ENCODE measurements at regions of chr3 and their contacts with region 1.

Region 1: DNA sequence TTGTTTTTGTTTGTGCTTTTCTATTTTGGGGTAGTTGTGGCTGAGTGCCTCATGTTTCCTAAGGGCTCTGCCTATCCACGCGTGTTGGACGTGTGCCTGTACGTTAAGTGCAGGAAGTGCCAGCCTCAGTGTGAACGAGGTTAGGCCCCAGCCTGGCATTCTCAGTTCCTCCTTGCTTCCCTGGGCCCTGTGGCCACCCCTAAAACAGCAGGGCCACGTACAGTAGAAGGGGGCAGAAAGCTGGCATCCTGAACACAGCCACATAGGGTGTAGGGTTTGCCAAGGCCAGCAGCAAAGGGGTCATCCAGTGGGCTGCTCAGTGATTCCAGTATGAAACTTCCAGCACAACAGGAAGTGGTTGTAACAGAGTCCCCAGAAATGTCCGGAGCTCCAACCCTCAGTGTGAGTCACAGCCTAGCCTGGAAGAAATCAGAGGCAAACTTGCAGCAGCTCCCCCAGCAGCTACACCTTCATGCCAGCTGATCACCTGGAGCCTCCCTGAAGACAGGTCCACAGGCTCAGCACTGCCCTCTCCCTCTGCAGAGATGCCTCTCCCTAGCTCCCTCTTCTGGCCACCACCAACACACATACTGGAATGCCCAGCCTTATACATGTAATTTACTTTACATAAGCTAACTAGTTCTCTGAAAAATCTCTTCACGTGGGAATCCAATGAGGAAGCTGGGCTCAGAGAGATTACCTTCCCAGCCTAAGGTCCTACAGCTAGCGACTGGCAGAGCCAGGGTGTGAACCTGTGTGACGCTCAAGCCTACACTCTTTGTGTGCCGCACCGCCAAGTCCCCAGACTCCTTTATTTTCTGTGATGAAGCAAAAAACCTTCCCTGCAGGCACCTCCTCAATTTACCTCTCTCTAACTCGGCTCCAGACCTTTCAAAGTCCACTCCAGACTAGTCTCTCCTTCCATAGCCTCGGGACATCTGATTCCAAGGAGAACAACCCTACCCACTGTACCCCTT is 26.6 kb downstream of the ILDR1 start:
- DNase-seq: peak; percentile 74
- ATAC-seq: peak; percentile 72
- H3K4me3 ChIP-seq: 0 out of 2 replicates have a peak overlapping the region, but pooled peaks have one; percentile 32
- H3K27ac ChIP-seq: peak overlapping the region; percentile 67
- H3K4me1 ChIP-seq: peaks cover 66% of the 10 kb centered on the region
- H3K27me3 ChIP-seq: no peaks in the 10 kb centered on the region
- CTCF ChIP-seq: peak; percentile 56 to 71 (median 59)
- EP300 ChIP-seq: no peak; a peak in 1 of 4 replicates
- POLR2A ChIP-seq: no peak
- RAD21 ChIP-seq: peak; percentile 59

Region 2: GRCh38 chr3:121809249-121809648 is 186.2 kb before region 1 on chr3:
- CTCF ChIA-PET with region 1: interaction called, 3 read pairs
- POLR2A ChIA-PET with region 1: no interaction called
- RAD21 ChIA-PET with region 1: interaction called, 4 read pairs
- SMC1A ChIA-PET with region 1: interaction called, 12 read pairs
- in situ Hi-C with region 1: no loop called
- intact Hi-C with region 1: no loop called
- DNase-seq: peak; percentile 84
- ATAC-seq: peak; percentile 99
- H3K4me3 ChIP-seq: no peak overlapping the region
- H3K27ac ChIP-seq: peak overlapping the region; percentile 81
- H3K4me1 ChIP-seq: peaks cover 26% of the 10 kb centered on the region
- H3K27me3 ChIP-seq: no peaks in the 10 kb centered on the region
- CTCF ChIP-seq: no peak
- EP300 ChIP-seq: peak; percentile 75 to 87
- POLR2A ChIP-seq: no peak
- RAD21 ChIP-seq: no peak

Region 3: DNA sequence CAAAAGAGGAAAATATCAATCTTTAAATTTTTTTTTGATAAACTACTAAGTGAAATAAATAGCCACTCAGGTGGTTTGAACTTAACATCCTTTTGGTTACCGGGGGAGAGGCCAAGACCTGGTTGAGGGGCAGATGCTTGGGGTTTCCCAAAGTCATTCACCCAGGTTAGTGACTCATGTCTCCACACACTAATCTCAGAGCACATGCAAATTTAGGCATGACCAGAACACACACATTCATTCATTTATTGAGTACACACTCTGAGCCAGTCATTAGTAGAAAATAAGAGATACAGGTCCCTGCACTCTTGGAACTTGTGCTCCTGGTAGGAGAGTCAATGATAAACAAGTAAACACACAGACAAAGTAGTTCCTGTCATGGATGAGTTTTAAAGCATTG is 19.3 kb after region 1 on chr3:
- CTCF ChIA-PET with region 1: interaction called, 57 read pairs
- POLR2A ChIA-PET with region 1: interaction called, 120 read pairs
- RAD21 ChIA-PET with region 1: interaction called, 76 read pairs
- SMC1A ChIA-PET with region 1: interaction called, 454 read pairs
- in situ Hi-C with region 1: no loop called
- intact Hi-C with region 1: no loop called
- DNase-seq: peak; percentile 91
- ATAC-seq: peak; percentile 80
- H3K4me3 ChIP-seq: peak overlapping the region; percentile 18; the same call in 1 of the 2 replicates
- H3K27ac ChIP-seq: peak overlapping the region; percentile 60
- H3K4me1 ChIP-seq: peaks cover 72% of the 10 kb centered on the region
- H3K27me3 ChIP-seq: no peaks in the 10 kb centered on the region
- CTCF ChIP-seq: no peak
- EP300 ChIP-seq: peak; percentile 81 to 86; a peak in 3 of 4 replicates
- POLR2A ChIP-seq: no peak
- RAD21 ChIP-seq: no peak

Region 4: DNA sequence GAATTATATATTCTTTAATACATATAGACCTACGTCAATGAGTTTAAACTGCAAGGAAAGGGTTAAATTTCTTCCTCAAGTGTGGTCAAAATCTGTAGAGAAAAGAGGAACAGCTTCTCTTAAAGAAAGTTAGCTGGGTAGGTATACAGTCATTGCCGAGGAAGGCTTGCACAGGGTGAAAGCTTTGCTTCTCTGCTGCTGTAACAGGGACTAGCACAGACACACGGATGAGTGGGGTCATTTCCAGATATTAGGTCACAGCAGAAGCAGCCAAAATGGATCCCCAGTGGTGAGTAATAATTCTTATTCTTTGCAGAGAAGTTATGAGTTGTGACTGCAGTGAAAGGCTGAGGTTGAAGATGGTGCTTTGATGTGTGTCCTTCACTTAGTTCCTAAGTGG is 59.8 kb after region 1 on chr3 and contains the start of gene CD86:
- CTCF ChIA-PET with region 1: interaction called, 10 read pairs
- POLR2A ChIA-PET with region 1: interaction called, 4 read pairs
- RAD21 ChIA-PET with region 1: interaction called, 16 read pairs
- SMC1A ChIA-PET with region 1: interaction called, 23 read pairs
- in situ Hi-C with region 1: no loop called
- intact Hi-C with region 1: loop called (anchors 5 kb)
- DNase-seq: peak; percentile 77
- ATAC-seq: peak; percentile 92
- H3K4me3 ChIP-seq: peak within 1 kb of the TSS; percentile 61
- H3K27ac ChIP-seq: peak within 1 kb of the TSS; percentile 45
- H3K4me1 ChIP-seq: peaks cover 13% of the 10 kb centered on the region
- H3K27me3 ChIP-seq: no peaks in the 10 kb centered on the region
- CTCF ChIP-seq: no peak
- EP300 ChIP-seq: peak in 1 of 2 experiments; percentile 68; a peak in 1 of 4 replicates
- POLR2A ChIP-seq: peak; percentile 79
- RAD21 ChIP-seq: peak; percentile 14; the same call in 1 of the 2 replicates
- polyA plus RNA-seq, gene CD86: 68.0 to 79.5 TPM

Region 5: GRCh38 chr3:122081543-122082247 is 86.2 kb after region 1 on chr3:
- CTCF ChIA-PET with region 1: interaction called, 33 read pairs
- POLR2A ChIA-PET with region 1: interaction called, 8 read pairs
- RAD21 ChIA-PET with region 1: interaction called, 93 read pairs
- SMC1A ChIA-PET with region 1: interaction called, 882 read pairs
- in situ Hi-C with region 1: loop called (anchors 5 kb)
- intact Hi-C with region 1: no loop called
- DNase-seq: no peak
- ATAC-seq: peak; percentile 57
- H3K4me3 ChIP-seq: peak overlapping the region; percentile 86; the same call in 1 of the 2 replicates
- H3K27ac ChIP-seq: peak overlapping the region; percentile 97
- H3K4me1 ChIP-seq: peaks cover 62% of the 10 kb centered on the region
- H3K27me3 ChIP-seq: no peaks in the 10 kb centered on the region
- CTCF ChIP-seq: no peak
- EP300 ChIP-seq: peak; percentile 62 to 89; a peak in 3 of 4 replicates
- POLR2A ChIP-seq: no peak
- RAD21 ChIP-seq: 0 out of 2 replicates have a peak, but pooled peaks have one; percentile 12

Region 6: GRCh38 chr3:122123850-122124249 is 128.4 kb after region 1 on chr3:
- CTCF ChIA-PET with region 1: no interaction called
- POLR2A ChIA-PET with region 1: no interaction called
- RAD21 ChIA-PET with region 1: no interaction called
- SMC1A ChIA-PET with region 1: no interaction called
- in situ Hi-C with region 1: no loop called
- intact Hi-C with region 1: no loop called
- DNase-seq: no peak
- ATAC-seq: no peak
- H3K4me3 ChIP-seq: no peak overlapping the region
- H3K27ac ChIP-seq: no peak overlapping the region
- H3K4me1 ChIP-seq: no peaks in the 10 kb centered on the region
- H3K27me3 ChIP-seq: no peaks in the 10 kb centered on the region
- CTCF ChIP-seq: no peak
- EP300 ChIP-seq: no peak
- POLR2A ChIP-seq: no peak
- RAD21 ChIP-seq: no peak

Region 7: GRCh38 chr3:122214711-122215110 is 219.3 kb after region 1 on chr3:
- CTCF ChIA-PET with region 1: no interaction called
- POLR2A ChIA-PET with region 1: no interaction called
- RAD21 ChIA-PET with region 1: no interaction called
- SMC1A ChIA-PET with region 1: no interaction called
- in situ Hi-C with region 1: no loop called
- intact Hi-C with region 1: no loop called
- DNase-seq: no peak
- ATAC-seq: no peak
- H3K4me3 ChIP-seq: no peak overlapping the region
- H3K27ac ChIP-seq: no peak overlapping the region
- H3K4me1 ChIP-seq: 0 out of 2 replicates have a peak, but pooled peaks cover 2% of the 10 kb centered on the region
- H3K27me3 ChIP-seq: no peaks in the 10 kb centered on the region
- CTCF ChIP-seq: no peak
- EP300 ChIP-seq: no peak
- POLR2A ChIP-seq: no peak
- RAD21 ChIP-seq: no peak

Measured in GM12878 (cell line).